ENCODE measurements at regions of chr2 and their contacts with region 1.

Region 1: DNA sequence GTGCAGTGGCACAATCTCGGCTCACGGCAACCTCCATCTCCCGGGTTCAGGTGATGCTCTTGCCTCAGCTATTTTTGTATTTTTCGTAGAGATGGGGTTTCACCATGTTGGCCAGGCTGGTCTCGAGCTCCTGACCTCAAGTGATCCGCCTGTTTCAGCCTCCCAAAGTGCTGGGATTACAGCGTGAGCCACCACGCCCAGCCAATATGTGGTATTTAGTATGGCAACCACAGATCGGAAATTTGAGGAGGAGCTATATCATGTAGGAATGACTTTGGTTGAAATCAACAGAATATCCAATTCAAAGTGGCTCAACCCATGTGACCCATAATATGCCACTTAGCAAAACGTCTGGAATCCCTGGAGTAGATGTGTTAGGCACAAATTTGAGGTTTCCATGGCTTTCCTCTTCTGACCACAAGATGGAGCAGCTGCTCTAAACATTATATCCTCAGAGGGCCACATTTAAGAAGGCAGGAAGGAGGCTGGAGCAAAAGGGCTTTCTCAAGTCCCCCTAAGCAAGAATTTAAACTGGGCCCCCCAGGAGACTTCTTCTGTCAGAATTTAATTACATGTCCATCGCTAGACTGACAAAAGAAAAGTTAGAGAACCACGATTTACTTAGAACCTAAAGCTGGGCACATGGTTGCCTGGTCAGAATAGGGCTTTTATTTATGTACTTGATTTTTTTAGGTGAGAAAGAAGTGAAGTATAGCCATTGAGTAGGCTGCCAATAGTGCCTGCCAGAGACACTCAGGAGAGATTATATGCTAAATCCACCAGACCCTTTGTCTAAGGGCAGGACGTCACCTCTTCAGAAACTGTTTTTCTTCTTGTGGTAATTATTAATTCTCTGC is 49.6 kb upstream of the ITSN2 start:
- DNase-seq: peak; percentile 37 to 38
- ATAC-seq: peak; percentile 89 to 98
- H3K4me3 ChIP-seq: no peak overlapping the region
- H3K27ac ChIP-seq: no peak overlapping the region
- H3K4me1 ChIP-seq: peaks cover 6 to 26% of the 10 kb centered on the region in 2 donors
- H3K27me3 ChIP-seq: no peaks in the 10 kb centered on the region
- CTCF ChIP-seq: peak; percentile 79 to 87 (median 84)
- POLR2A ChIP-seq: no peak

Region 2: DNA sequence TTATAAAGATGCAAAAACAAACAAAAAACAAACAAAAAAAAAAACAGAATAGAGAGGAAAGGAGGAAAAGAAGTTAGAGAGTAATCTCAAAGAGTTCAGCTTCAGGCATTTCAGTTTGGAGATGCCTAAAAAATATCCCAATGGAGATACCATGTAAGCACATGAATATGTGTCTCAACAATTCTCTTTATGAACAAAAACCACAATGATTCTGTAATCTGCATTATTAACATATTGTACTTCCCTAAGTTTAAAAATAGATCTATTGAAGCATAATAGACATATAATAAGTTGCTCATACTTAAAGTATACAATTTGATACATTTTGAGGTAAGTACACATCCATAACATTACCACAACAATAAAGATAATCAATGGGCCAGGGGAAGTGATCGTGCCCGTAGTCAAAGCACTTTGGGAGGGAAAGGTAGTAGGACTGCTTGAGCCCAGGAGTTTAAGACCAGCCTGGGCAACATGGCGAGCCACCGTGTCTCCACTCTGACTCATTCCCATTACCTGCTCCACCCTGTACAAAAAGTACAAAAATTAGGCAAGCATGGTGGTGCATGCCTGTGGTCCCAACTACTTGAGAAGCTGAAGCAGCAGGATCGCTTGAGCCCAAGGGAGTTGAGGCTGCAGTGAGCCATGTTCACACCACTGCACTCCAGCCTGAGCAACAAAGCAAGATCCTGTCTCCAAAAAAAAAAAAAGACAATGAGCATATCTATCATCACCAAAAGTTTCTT is 641.9 kb before region 1 on chr2:
- in situ Hi-C with region 1: no loop called
- intact Hi-C with region 1: no loop called
- DNase-seq: no peak
- ATAC-seq: peak in 1 of 2 donors; percentile 16
- H3K4me3 ChIP-seq: no peak overlapping the region
- H3K27ac ChIP-seq: no peak overlapping the region
- H3K4me1 ChIP-seq: no peaks in the 10 kb centered on the region
- H3K27me3 ChIP-seq: no peaks in the 10 kb centered on the region
- CTCF ChIP-seq: no peak
- POLR2A ChIP-seq: no peak

Region 3: DNA sequence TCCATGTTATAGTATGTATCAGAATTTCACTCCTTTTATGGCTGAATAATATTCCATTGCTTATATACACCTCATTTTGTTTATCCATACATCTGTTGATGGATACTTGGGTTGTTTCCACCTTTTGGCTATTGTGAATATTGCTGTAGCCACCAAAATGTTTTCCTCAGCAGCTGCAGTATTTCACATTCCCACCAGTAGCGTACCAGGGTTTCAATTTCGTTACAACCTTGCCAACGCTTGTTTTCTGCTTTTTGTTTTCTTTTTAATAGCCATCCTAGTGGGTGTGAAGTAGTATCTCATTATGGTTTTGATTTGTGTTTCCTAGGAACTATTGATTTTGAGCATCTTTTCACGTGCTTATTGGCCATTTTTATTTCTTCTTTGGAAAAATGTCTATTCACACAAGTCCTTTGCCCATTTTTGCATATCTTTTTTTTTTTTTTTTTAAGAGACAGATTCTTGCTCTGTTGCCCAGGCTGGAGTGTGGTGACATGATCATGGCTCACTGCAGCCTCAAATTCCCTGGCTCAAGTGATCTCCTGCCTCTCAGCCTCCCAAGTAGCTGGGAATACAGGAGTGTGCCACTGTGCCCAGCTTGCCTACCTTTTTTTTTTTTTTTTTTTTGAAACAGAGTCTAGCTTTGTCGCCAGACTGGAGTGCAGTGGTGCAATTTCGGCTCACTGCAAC is 455.5 kb before region 1 on chr2:
- in situ Hi-C with region 1: no loop called
- intact Hi-C with region 1: no loop called
- DNase-seq: no peak
- ATAC-seq: no peak
- H3K4me3 ChIP-seq: no peak overlapping the region
- H3K27ac ChIP-seq: no peak overlapping the region
- H3K4me1 ChIP-seq: no peaks in the 10 kb centered on the region
- H3K27me3 ChIP-seq: no peaks in the 10 kb centered on the region
- CTCF ChIP-seq: no peak
- POLR2A ChIP-seq: no peak

Region 4: DNA sequence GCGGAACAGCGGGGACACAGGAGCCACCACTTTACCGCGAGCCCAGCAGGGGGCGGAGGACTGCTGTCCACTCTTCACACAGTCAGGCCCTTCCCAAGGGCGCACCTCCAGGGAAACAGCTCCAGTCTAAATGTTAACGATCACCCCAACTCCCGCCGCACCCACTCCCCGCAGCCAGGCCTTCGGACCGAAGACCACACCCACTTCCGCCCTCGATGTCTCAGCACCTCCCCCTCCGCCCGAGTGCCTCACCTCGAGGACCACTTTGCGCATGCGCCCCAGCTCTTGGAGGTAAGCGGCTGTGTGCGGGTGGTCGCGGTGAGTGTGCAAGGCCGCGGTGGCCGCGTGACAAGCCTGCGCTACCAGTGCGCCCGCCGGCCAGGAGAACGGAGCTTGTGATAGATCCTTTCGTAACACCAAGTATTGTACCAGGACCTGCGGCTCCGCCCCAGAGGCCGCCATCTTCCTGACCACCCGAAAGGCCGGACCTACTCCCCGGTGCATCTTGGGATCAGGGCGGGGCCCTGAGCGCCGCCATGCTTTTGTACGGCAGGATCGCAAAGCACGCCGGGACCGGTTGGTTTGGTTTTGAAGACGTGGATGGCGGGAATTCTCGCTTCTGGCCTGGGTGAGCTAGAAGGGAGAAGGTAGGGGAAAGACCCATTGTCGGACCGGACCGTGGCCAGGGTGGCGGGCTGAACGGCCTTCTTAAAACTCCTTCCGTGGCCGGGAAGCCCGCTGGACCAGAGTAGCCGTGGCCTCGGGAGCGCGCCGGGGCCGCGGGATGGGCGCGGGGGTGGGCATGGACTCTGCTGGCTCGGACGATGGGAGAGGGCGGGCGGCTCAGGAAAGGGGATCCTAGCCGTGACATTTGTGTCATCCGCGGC is 383.2 kb after region 1 on chr2 and contains the starts of genes CENPO and PTRHD1:
- in situ Hi-C with region 1: loop called in 1 of 4 experiments (anchors 25 kb)
- intact Hi-C with region 1: no loop called
- DNase-seq: peak; percentile 93 to 95
- ATAC-seq: peak; percentile 97 to 98
- H3K4me3 ChIP-seq: peak within 1 kb of the TSS; percentile 67 to 94 (median 88)
- H3K27ac ChIP-seq: peak within 1 kb of the TSS; percentile 95 to 99 (median 98)
- H3K4me1 ChIP-seq: peaks cover 16 to 17% of the 10 kb centered on the region in 2 donors
- H3K27me3 ChIP-seq: no peaks in the 10 kb centered on the region
- CTCF ChIP-seq: peak; percentile 57 to 72 (median 66)
- POLR2A ChIP-seq: peak; percentile 31 to 36
- total RNA-seq, gene CENPO: 1.2 to 3.6 (median 2.7) TPM
- total RNA-seq, gene PTRHD1: 17.3 to 45.0 (median 37.3) TPM

Region 5: GRCh38 chr2:24827321-24828237 is 417.7 kb after region 1 on chr2:
- in situ Hi-C with region 1: loop called in 3 of 4 experiments (anchors 5 to 10 kb)
- intact Hi-C with region 1: loop called (anchors 1 kb)
- DNase-seq: peak; percentile 65 to 76
- ATAC-seq: peak; percentile 92 to 97
- H3K4me3 ChIP-seq: peak overlapping the region in 2 of 4 donors; percentile 6 to 30
- H3K27ac ChIP-seq: no peak overlapping the region
- H3K4me1 ChIP-seq: peaks cover 0 to 13% of the 10 kb centered on the region in 2 donors
- H3K27me3 ChIP-seq: no peaks in the 10 kb centered on the region
- CTCF ChIP-seq: peak; percentile 72 to 91 (median 83)
- POLR2A ChIP-seq: no peak

Region 6: GRCh38 chr2:24920098-24920808 is 510.3 kb after region 1 on chr2 and contains the start of gene ADCY3:
- in situ Hi-C with region 1: no loop called
- intact Hi-C with region 1: loop called (anchors 10 kb)
- DNase-seq: no peak
- ATAC-seq: peak; percentile 57 to 70
- H3K4me3 ChIP-seq: peak within 1 kb of the TSS; percentile 55 to 65 (median 62)
- H3K27ac ChIP-seq: peak within 1 kb of the TSS; percentile 51 to 63 (median 57)
- H3K4me1 ChIP-seq: no peaks in the 10 kb centered on the region
- H3K27me3 ChIP-seq: no peaks in the 10 kb centered on the region
- CTCF ChIP-seq: no peak
- POLR2A ChIP-seq: peak; percentile 7 to 19
- total RNA-seq, gene ADCY3: 3.9 to 16.6 (median 12.3) TPM

Region 7: DNA sequence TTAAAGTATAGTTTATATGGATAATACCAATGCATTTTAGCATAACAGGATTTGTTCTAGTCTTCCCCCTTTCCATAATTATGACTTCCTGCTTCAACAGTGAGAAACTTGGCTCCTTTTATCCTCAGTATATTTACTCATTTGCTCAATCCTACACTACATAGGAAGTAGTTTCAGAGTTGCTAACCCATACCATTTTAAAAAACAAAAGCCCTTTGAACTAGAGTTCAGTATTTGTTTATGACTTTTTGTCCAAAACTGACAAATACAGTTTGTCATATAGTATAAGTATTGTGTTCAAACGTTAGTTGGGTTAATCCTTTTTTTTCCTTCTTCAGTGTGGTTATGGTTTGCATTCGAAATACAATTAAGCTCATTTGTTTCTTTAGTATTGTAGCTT is 567.7 kb after region 1 on chr2:
- in situ Hi-C with region 1: no loop called
- intact Hi-C with region 1: loop called (anchors 5 kb)
- DNase-seq: no peak
- ATAC-seq: no peak
- H3K4me3 ChIP-seq: no peak overlapping the region
- H3K27ac ChIP-seq: no peak overlapping the region
- H3K4me1 ChIP-seq: peaks cover 9 to 16% of the 10 kb centered on the region in 2 donors
- H3K27me3 ChIP-seq: no peaks in the 10 kb centered on the region
- CTCF ChIP-seq: no peak
- POLR2A ChIP-seq: no peak

Region 8: DNA sequence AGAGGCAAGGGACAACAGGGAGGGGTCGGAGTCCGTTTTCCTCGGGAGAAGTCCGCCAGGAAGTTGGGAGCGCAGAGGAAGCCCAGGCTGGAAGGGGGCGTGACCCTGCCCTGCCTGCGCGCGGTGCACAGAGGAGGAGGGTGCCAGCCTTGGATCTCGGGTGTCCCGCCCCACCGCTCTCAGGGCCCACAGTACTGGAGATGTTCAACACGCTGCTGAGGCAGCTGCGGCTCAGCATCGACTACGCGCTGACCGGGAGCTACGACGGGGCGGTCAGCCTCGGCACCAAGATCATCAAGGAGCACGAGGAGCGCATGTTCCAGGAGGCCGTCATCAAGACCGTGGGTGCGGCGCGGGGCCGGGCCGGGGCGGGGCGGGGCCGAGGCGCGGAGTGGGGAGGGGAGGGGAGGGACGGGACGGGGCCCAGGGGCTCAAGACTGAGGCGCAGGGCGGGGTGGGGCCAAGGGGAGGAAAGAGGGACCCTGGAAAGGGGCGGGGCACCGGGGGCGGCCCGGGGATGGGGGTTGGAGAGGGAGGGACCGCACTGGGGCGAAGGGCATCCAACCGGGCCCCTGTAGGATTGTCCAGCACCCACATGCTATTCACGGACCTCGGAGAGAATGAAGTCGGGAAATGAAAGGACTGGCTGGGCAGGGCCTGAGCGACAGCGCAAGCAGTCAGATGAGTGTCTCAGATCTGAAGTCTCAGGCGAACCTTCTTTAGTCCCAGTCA is 721.8 kb after region 1 on chr2:
- in situ Hi-C with region 1: loop called in 3 of 4 experiments (anchors 25 kb)
- intact Hi-C with region 1: no loop called
- DNase-seq: no peak
- ATAC-seq: no peak
- H3K4me3 ChIP-seq: peak overlapping the region; percentile 9 to 38 (median 29)
- H3K27ac ChIP-seq: no peak overlapping the region
- H3K4me1 ChIP-seq: no peaks in the 10 kb centered on the region
- H3K27me3 ChIP-seq: no peaks in the 10 kb centered on the region
- CTCF ChIP-seq: no peak
- POLR2A ChIP-seq: no peak